ENCODE measurements at regions of chr12 and their contacts with region 1.

Region 1: GRCh38 chr12:67943226-67943892 is 45.9 kb upstream of the IFNG-AS1 start:
- DNase-seq: peak in 4 of 10 donors; percentile 39 to 88 (median 48)
- H3K4me3 ChIP-seq: no peak overlapping the region
- H3K27ac ChIP-seq: no peak overlapping the region
- H3K27me3 ChIP-seq: no peaks in the 10 kb centered on the region
- CTCF ChIP-seq: peak; percentile 47 to 95 (median 79)

Region 2: DNA sequence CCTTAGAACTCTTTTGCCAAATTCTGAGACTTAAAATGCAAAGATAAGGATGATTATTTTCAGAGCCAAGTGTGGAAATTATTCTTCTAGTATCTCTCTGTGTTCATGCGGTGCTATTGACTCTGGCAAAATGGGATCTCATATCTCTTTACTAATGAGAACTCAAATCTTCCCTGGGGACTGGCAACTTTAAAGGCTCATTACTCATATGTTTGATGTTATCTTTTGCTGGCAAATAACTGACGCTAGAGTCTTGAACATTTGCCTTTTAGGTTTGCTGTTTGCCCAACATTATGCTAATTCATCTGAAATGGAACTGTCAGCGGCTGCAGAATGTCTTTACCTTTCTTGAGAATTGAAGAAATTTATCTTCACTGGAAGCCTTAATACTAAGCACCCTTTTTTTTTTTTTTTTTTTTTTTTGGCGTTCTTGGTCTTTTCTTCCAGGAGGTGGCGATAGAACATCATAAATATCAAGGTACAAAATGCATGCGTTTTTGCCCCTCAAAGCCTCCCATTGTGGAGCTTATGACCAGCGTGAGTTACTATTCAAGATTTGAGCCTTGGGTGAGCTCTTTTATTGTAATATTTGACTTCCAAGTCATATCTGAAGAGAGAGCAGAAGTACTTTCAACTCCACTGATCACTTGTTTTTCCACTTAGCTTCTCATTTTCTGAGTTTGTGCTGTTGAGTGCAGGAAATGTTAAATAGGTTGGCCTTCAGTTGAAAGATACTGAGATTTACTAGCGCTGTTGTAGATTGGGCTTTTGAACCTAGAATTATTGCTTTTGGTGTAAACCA is 587.6 kb before region 1 on chr12:
- intact Hi-C with region 1: loop called (anchors 5 kb)
- DNase-seq: no peak
- H3K4me3 ChIP-seq: peak overlapping the region in 4 of 59 donors; percentile 9 to 30 (median 20)
- H3K27ac ChIP-seq: peak overlapping the region in 3 of 59 donors; percentile 8 to 54 (median 30)
- H3K27me3 ChIP-seq: peaks cover 0 to 6% (median 0%) of the 10 kb centered on the region in 45 donors
- CTCF ChIP-seq: peak; percentile 44 to 90 (median 70)

Region 3: GRCh38 chr12:67426067-67426466 is 517.3 kb before region 1 on chr12:
- intact Hi-C with region 1: loop called (anchors 5 to 10 kb)
- DNase-seq: no peak
- H3K4me3 ChIP-seq: no peak overlapping the region
- H3K27ac ChIP-seq: no peak overlapping the region
- H3K27me3 ChIP-seq: peaks cover 0 to 3% (median 0%) of the 10 kb centered on the region in 45 donors
- CTCF ChIP-seq: no peak

Region 4: DNA sequence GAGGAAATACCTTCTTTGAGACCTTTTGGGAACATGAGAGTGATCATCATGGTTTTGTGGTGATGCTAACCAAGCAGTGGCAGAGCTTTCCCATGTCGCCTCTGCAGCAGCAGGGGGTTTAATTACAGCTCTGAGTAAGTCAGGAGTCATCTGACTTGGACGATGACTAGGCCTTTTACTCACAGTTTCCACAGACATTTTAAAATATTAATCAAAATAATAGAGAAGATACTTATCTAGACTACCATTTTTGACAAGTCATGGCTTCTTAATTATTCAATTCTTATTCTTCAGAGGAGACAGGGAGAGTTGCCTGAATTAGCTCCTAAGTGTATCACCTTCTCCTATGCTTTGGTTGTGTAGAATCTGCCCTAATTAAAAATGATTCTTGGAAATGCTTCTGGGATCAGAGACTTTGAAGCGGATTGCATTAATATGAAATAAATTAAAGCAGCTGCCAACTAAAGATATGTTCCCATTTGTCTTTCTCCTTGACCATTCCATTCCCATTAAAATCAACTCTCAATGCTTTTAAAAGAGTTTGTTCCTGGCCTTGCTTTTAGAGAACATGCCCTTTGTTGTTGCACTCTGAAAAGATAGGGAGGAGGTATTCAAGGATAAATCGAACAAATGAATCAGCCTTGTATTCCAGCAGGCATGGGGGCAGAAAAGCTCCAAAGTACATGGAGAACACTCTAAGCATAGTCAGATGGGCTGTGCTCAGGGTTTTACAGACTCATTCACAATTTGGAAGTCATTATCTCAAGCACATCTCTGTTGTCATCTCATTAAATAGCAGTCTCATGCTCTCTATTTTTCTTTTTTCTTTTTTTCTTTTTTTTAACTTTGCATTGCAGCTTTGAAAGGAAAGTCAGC is 38.2 kb after region 1 on chr12:
- intact Hi-C with region 1: no loop called
- DNase-seq: no peak
- H3K4me3 ChIP-seq: no peak overlapping the region
- H3K27ac ChIP-seq: no peak overlapping the region
- H3K27me3 ChIP-seq: peaks cover 0 to 10% (median 0%) of the 10 kb centered on the region in 45 donors
- CTCF ChIP-seq: no peak

Measured in dorsolateral prefrontal cortex (tissue), 120 donors.